GM10248 (cell line): ENCODE measurements at regions of chr17 and their contacts with region 1.

Region 1: DNA sequence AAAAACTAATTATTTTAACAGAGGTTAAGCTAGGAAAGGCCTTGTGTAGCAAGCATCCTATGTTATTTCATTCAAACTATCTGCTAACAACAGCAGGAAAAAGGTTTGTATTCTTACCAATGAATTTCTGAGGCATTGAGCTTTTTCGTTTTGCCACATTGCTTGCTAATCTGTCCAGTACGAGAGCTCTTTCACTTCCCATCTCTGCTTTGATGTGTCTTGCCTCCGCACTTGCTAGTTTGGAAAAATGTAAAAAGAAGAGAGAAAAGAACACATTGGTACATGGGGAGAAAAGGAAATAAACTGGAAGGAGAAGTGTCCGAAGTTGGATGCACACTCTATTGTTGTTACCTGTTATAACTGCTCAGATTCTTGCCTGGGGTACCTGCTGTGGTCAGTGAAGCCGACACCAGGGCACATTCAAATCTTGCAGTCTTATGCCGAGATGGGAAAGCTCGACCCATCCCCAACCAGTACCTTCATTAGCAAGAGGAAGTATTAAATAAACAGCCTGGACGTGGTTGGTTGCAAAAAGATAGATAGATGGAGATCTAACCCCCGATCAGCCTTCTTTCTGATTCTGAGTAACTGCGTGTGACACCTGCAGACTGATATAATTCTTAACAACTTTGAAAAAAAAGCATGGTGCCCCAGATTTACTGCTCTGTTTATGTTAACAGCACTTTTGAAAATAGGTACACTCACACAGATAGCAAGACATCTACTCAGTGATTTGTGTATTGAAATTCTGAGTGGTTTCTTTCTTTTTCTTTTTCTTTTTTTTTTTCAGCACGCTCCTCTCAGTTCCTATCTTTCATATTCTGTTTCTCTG is 40.0 kb downstream of the GRB7 start:
- DNase-seq: peak; percentile 62
- CTCF ChIP-seq: no peak

Region 2: GRCh38 chr17:39261286-39261685 is 516.5 kb before region 1 on chr17:
- CTCF ChIA-PET with region 1: no interaction called
- POLR2A ChIA-PET with region 1: no interaction called
- DNase-seq: no peak
- CTCF ChIP-seq: no peak

Region 3: DNA sequence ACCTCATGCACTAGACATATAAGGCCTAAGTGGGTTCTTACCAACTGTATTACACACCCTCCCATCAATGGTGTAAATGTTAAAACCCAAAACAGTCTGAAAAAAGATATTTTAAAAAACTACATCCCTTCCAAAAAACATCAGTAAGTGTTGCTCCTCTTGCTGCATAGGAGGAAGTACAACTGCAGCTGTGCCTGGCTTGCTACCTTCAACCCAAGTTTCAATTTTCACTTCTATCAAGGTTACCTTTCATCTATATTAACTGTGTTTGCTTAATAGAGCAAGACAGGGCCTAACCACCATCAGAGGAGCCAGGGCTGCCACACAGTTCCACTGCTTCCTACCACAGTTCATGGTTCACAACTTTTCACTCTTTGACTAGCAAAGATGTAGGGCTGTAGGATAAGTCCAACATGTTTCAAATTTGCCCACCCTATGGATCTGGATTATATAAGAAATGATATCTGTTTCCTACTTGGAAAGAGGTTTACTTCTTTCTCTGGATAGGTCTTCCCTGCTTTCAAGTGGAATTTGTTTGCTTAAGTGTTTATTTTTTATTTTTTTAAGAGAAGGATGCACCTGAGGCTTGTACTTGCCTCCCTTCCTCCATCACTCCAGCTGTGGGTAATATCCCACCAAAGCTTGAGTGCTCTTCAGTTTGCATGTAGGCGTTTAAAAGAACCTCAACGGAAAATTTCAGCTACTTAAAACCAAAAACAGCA is 16.7 kb after region 1 on chr17:
- CTCF ChIA-PET with region 1: interaction called, 21 read pairs
- POLR2A ChIA-PET with region 1: no interaction called
- DNase-seq: peak; percentile 72
- CTCF ChIP-seq: no peak

Region 4: GRCh38 chr17:39835038-39835786 is 57.5 kb after region 1 on chr17:
- CTCF ChIA-PET with region 1: no interaction called
- POLR2A ChIA-PET with region 1: no interaction called
- DNase-seq: no peak
- CTCF ChIP-seq: peak; percentile 14